WTC11 (cell line): ENCODE measurements at regions of chr5 and their contacts with region 1.

Region 1: GRCh38 chr5:75320341-75320740 is 16.7 kb upstream of the HMGCR start:
- DNase-seq: no peak
- ATAC-seq: no peak
- H3K4me3 Mint-ChIP-seq: no peak overlapping the region
- H3K27ac Mint-ChIP-seq: no peak overlapping the region
- H3K4me1 Mint-ChIP-seq: peaks cover 30% of the 10 kb centered on the region
- H3K27me3 Mint-ChIP-seq: no peaks in the 10 kb centered on the region; the same call in 1 of the 2 replicates
- CTCF ChIP-seq: no peak

Region 2: GRCh38 chr5:75336625-75337339 is 16.4 kb after region 1 on chr5 and contains the start of gene HMGCR:
- CTCF ChIA-PET with region 1: interaction called, 10 read pairs
- POLR2A ChIA-PET with region 1: interaction called, 12 read pairs
- DNase-seq: peak; percentile 99
- ATAC-seq: peak; percentile 98
- H3K4me3 Mint-ChIP-seq: no peak within 1 kb of the TSS
- H3K27ac Mint-ChIP-seq: peak within 1 kb of the TSS; percentile 95
- H3K4me1 Mint-ChIP-seq: peaks cover 31% of the 10 kb centered on the region
- H3K27me3 Mint-ChIP-seq: no peaks in the 10 kb centered on the region
- CTCF ChIP-seq: no peak
- total RNA-seq, gene HMGCR: 137 to 153 TPM (median 145 TPM) in 3 replicates